A673 (cell line): ENCODE measurements at regions of chr6 and their contacts with region 1.

Region 1: GRCh38 chr6:17584241-17584803 is 15.8 kb upstream of the FAM8A1 start:
- DNase-seq: peak; percentile 82
- H3K4me3 ChIP-seq: no peak overlapping the region
- H3K27ac ChIP-seq: no peak overlapping the region
- H3K4me1 ChIP-seq: no peaks in the 10 kb centered on the region
- H3K27me3 ChIP-seq: no peaks in the 10 kb centered on the region
- CTCF ChIP-seq: peak; percentile 98

Region 2: GRCh38 chr6:17156112-17156921 is 428.0 kb before region 1 on chr6:
- CTCF ChIA-PET with region 1: interaction called, 6 read pairs
- POLR2A ChIA-PET with region 1: no interaction called
- intact Hi-C with region 1: loop called (anchors 1 kb)
- DNase-seq: peak; percentile 85
- H3K4me3 ChIP-seq: no peak overlapping the region
- H3K27ac ChIP-seq: no peak overlapping the region
- H3K4me1 ChIP-seq: no peaks in the 10 kb centered on the region
- H3K27me3 ChIP-seq: no peaks in the 10 kb centered on the region
- CTCF ChIP-seq: peak; percentile 84

Region 3: GRCh38 chr6:17392978-17393891 is 191.1 kb before region 1 on chr6 and contains the start of gene CAP2:
- CTCF ChIA-PET with region 1: interaction called, 14 read pairs
- POLR2A ChIA-PET with region 1: no interaction called
- intact Hi-C with region 1: no loop called
- DNase-seq: peak; percentile 88
- H3K4me3 ChIP-seq: peak within 1 kb of the TSS; percentile 84
- H3K27ac ChIP-seq: peak within 1 kb of the TSS; percentile 76
- H3K4me1 ChIP-seq: peaks cover 6% of the 10 kb centered on the region
- H3K27me3 ChIP-seq: no peaks in the 10 kb centered on the region
- CTCF ChIP-seq: 0 out of 2 replicates have a peak, but pooled peaks have one; percentile 15
- total RNA-seq, gene CAP2: 18.4 and 20.8 TPM in 2 replicates

Region 4: DNA sequence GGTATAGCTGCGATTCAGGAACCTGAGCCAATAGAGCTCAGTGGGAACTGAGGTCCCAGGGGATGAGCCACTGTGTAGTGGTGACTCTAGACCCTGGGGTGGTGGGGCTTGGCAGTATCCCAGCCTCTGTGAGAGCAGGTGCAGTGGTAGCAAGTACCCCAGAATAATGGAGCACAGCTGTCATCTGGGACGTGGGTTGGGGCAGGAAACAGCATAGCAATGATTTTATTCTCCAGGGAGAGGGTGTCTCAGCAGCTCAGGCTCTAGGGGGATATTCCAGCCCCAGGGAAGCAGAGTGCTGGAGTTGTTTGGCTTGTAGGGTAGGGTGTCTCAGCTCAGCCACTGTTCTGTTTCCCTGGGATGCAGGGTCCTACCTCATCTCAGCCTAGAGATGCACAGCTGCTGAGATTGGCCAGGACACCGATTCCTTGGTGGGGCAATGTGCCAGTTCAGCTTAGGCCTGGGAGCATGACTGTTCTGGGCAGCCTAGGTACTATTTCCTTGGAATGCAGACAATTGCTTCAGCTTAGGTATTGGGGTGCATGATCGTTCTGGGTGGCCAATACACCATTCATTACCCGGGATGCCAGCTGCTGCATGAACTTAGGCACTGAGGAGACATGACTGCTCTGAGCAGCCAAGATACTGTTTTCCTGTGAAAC is 156.4 kb after region 1 on chr6:
- CTCF ChIA-PET with region 1: no interaction called
- POLR2A ChIA-PET with region 1: no interaction called
- intact Hi-C with region 1: no loop called
- DNase-seq: peak; percentile 62
- H3K4me3 ChIP-seq: no peak overlapping the region
- H3K27ac ChIP-seq: peak overlapping the region; percentile 34
- H3K4me1 ChIP-seq: peaks cover 18% of the 10 kb centered on the region
- H3K27me3 ChIP-seq: no peaks in the 10 kb centered on the region
- CTCF ChIP-seq: no peak

Region 5: GRCh38 chr6:17820055-17820454 is 235.7 kb after region 1 on chr6:
- CTCF ChIA-PET with region 1: interaction called, 4 read pairs
- POLR2A ChIA-PET with region 1: no interaction called
- intact Hi-C with region 1: loop called (anchors 1 kb)
- DNase-seq: peak; percentile 7
- H3K4me3 ChIP-seq: no peak overlapping the region
- H3K27ac ChIP-seq: no peak overlapping the region
- H3K4me1 ChIP-seq: no peaks in the 10 kb centered on the region
- H3K27me3 ChIP-seq: no peaks in the 10 kb centered on the region
- CTCF ChIP-seq: no peak

Region 6: GRCh38 chr6:18503593-18504231 is 919.4 kb after region 1 on chr6:
- CTCF ChIA-PET with region 1: no interaction called
- POLR2A ChIA-PET with region 1: no interaction called
- intact Hi-C with region 1: loop called (anchors 10 kb)
- DNase-seq: peak; percentile 88
- H3K4me3 ChIP-seq: no peak overlapping the region
- H3K27ac ChIP-seq: no peak overlapping the region
- H3K4me1 ChIP-seq: peaks cover 30% of the 10 kb centered on the region
- H3K27me3 ChIP-seq: no peaks in the 10 kb centered on the region
- CTCF ChIP-seq: peak; percentile 92